Panc1 (cell line): ENCODE measurements at regions of chr5 and their contacts with region 1.

Region 1: GRCh38 chr5:141040771-141041426 is 10.3 kb upstream of the PCDHB1 start:
- DNase-seq: peak; percentile 93
- ATAC-seq: peak; percentile 90
- H3K4me3 ChIP-seq: peak overlapping the region; percentile 48 to 89
- H3K27ac ChIP-seq: peak overlapping the region; percentile 71
- H3K4me1 ChIP-seq: peaks cover 7% of the 10 kb centered on the region; the same call in 1 of the 2 replicates
- H3K27me3 ChIP-seq: peaks cover 3% of the 10 kb centered on the region; the same call in 1 of the 2 replicates
- CTCF ChIP-seq: peak; percentile 81

Region 2: GRCh38 chr5:140806834-140807775 is 233.8 kb before region 1 on chr5 and contains the start of gene PCDHA4:
- CTCF ChIA-PET with region 1: no interaction called
- POLR2A ChIA-PET with region 1: no interaction called
- in situ Hi-C with region 1: no loop called
- intact Hi-C with region 1: loop called (anchors 2 kb)
- DNase-seq: no peak
- ATAC-seq: peak; percentile 95
- H3K4me3 ChIP-seq: peak within 1 kb of the TSS; percentile 54 to 61
- H3K27ac ChIP-seq: no peak within 1 kb of the TSS
- H3K4me1 ChIP-seq: no peaks in the 10 kb centered on the region
- H3K27me3 ChIP-seq: no peaks in the 10 kb centered on the region
- CTCF ChIP-seq: peak; percentile 79
- total RNA-seq, gene PCDHA4: 3.1 TPM

Region 3: DNA sequence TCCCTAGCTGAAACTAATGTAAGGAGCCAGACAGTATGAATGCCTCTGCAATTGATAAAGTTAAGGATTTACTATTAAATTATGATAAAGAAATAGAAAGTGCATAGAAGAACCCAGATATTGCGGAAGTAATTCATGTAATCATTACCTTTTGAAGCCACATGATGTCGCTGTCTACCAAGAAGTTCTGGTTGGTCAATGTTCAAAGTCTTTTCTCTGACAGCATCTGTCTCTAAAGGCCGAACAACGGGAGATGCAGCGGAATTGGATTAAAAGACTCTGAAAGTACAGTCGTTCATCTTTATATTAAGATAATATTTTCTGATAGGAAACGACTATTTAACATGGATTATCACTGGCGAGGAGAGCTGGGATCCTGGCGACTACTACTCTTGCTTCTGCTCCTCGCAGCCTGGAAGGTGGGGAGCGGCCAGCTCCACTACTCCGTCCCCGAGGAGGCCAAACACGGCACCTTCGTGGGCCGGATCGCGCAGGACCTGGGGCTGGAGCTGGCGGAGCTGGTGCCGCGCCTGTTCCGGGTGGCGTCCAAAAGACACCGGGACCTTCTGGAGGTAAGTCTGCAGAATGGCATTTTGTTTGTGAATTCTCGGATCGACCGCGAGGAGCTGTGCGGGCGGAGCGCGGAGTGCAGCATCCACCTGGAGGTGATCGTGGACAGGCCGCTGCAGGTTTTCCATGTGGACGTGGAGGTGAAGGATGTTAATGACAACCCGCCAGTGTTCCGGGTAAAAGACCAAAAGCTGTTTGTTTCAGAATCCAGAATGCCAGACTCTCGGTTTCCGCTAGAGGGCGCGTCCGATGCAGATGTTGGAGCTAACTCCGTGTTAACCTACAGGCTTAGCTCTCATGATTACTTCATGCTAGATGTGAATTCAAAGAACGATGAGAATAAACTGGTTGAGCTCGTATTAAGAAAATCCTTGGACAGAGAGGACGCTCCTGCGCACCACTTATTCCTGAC is 199.6 kb before region 1 on chr5 and contains the start of gene PCDHA8:
- CTCF ChIA-PET with region 1: interaction called, 7 read pairs
- POLR2A ChIA-PET with region 1: no interaction called
- in situ Hi-C with region 1: no loop called
- intact Hi-C with region 1: loop called (anchors 1 kb)
- DNase-seq: no peak
- ATAC-seq: peak; percentile 78
- H3K4me3 ChIP-seq: peak within 1 kb of the TSS; percentile 37 to 50
- H3K27ac ChIP-seq: no peak within 1 kb of the TSS
- H3K4me1 ChIP-seq: no peaks in the 10 kb centered on the region
- H3K27me3 ChIP-seq: no peaks in the 10 kb centered on the region
- CTCF ChIP-seq: peak; percentile 71
- total RNA-seq, gene PCDHA8: 0.10 TPM

Region 4: GRCh38 chr5:140875066-140876065 is 165.5 kb before region 1 on chr5 and contains the start of gene PCDHA12:
- CTCF ChIA-PET with region 1: interaction called, 15 read pairs
- POLR2A ChIA-PET with region 1: no interaction called
- in situ Hi-C with region 1: no loop called
- intact Hi-C with region 1: loop called (anchors 2 kb)
- DNase-seq: no peak
- ATAC-seq: peak; percentile 91
- H3K4me3 ChIP-seq: peak within 1 kb of the TSS; percentile 53 to 66
- H3K27ac ChIP-seq: peak within 1 kb of the TSS; percentile 55
- H3K4me1 ChIP-seq: no peaks in the 10 kb centered on the region
- H3K27me3 ChIP-seq: no peaks in the 10 kb centered on the region
- CTCF ChIP-seq: peak; percentile 70
- total RNA-seq, gene PCDHA12: 10.0 TPM

Region 5: DNA sequence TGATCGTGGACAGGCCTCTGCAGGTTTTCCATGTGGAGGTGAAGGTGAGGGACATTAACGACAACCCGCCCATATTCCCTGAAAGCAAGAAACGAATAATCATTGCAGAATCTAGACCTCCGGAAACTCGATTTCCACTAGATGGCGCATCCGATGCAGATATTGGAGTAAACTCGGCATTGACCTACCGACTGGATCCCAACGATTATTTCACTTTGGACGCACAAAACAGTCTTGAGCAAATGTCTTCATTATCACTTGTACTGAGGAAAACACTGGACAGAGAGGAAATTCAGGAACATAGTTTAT is 158.4 kb before region 1 on chr5:
- CTCF ChIA-PET with region 1: interaction called, 3 read pairs
- POLR2A ChIA-PET with region 1: no interaction called
- in situ Hi-C with region 1: no loop called
- intact Hi-C with region 1: loop called (anchors 1 kb)
- DNase-seq: no peak
- ATAC-seq: peak; percentile 82
- H3K4me3 ChIP-seq: peak overlapping the region; percentile 24 to 54
- H3K27ac ChIP-seq: no peak overlapping the region
- H3K4me1 ChIP-seq: no peaks in the 10 kb centered on the region
- H3K27me3 ChIP-seq: no peaks in the 10 kb centered on the region
- CTCF ChIP-seq: peak; percentile 70

Region 6: DNA sequence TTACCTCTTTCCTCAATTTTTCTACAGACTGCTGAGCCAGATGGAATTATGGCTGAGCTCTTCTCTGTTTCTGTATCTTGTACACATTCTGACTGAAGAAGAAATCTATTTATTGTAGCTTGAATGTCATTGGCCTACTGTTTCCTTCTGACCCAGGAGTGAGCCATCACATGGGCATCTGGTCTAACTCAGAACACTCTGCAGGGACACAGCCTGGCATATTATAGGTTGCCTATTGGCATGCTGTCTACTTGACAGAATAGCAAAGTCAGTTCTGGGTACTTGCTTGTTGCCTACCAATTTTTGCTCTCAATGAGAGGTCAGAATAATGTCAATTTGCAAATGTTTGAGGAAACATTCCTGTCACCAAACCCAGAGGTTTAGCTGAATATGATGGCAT is 67.3 kb before region 1 on chr5:
- CTCF ChIA-PET with region 1: no interaction called
- POLR2A ChIA-PET with region 1: no interaction called
- in situ Hi-C with region 1: no loop called
- intact Hi-C with region 1: no loop called
- DNase-seq: no peak
- ATAC-seq: no peak
- H3K4me3 ChIP-seq: no peak overlapping the region
- H3K27ac ChIP-seq: no peak overlapping the region
- H3K4me1 ChIP-seq: peaks cover 3% of the 10 kb centered on the region; the same call in 1 of the 2 replicates
- H3K27me3 ChIP-seq: no peaks in the 10 kb centered on the region
- CTCF ChIP-seq: no peak

Region 7: DNA sequence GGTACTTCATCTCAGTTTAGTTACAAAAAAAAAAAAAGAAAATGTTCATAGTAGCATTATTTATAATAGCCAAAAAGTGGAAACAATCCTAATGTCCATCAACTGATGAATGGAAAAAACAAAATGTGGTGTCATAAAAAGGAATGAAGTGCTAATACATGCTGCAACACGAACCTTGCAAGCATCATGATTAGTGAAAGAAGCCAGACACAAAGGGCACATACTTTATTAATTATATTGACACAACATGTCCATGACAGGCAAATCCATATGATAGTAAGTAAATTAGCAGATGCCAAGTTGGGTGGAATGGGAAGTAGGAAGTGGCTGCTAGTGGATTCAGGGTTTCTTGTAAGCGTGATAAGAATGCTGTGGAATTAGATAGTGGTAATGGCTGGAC is 502.2 kb after region 1 on chr5:
- CTCF ChIA-PET with region 1: no interaction called
- POLR2A ChIA-PET with region 1: no interaction called
- in situ Hi-C with region 1: no loop called
- intact Hi-C with region 1: no loop called
- DNase-seq: no peak
- ATAC-seq: no peak
- H3K4me3 ChIP-seq: no peak overlapping the region
- H3K27ac ChIP-seq: no peak overlapping the region
- H3K4me1 ChIP-seq: no peaks in the 10 kb centered on the region
- H3K27me3 ChIP-seq: no peaks in the 10 kb centered on the region
- CTCF ChIP-seq: no peak